Activated naive CD8-positive, alpha-beta T cell treated with anti-CD3 and anti-CD28 coated beads, Interleukin-2, amount 10 ng/mL, durations not matched to agents 7 days and 5 days (primary cell): ENCODE measurements at regions of chrX and their contacts with region 1.

Region 1: GRCh38 chrX:119427024-119427794 is 28.1 kb downstream of the SLC25A43 start:
- DNase-seq: peak; percentile 39
- ATAC-seq: peak; percentile 80
- H3K4me3 Mint-ChIP-seq: peak overlapping the region; percentile 65
- H3K27ac Mint-ChIP-seq: peak overlapping the region; percentile 89
- H3K4me1 Mint-ChIP-seq: peaks cover 15% of the 10 kb centered on the region
- H3K27me3 Mint-ChIP-seq: no peaks in the 10 kb centered on the region

Region 2: DNA sequence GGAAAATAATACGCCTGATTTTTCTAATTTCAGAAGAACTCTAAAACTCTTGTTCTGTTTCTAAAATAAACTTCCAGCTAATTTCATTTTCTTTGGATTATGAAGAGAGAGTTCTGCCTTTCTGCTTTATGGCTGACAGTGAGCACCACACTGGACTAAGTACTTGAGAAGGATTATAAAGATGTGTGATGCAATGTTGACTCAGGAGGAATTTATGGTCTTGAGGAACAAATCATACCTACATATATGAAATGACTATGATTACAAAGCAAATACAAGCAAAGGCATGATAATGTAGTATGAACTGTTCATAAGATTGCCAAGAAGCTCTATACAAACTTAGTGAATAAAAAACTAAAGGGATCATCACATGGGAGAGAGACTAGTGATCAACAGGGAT is 28.1 kb after region 1 on chrX:
- POLR2A ChIA-PET with region 1: no interaction called
- DNase-seq: no peak
- ATAC-seq: no peak
- H3K4me3 Mint-ChIP-seq: no peak overlapping the region
- H3K27ac Mint-ChIP-seq: no peak overlapping the region
- H3K4me1 Mint-ChIP-seq: no peaks in the 10 kb centered on the region
- H3K27me3 Mint-ChIP-seq: no peaks in the 10 kb centered on the region

Region 3: DNA sequence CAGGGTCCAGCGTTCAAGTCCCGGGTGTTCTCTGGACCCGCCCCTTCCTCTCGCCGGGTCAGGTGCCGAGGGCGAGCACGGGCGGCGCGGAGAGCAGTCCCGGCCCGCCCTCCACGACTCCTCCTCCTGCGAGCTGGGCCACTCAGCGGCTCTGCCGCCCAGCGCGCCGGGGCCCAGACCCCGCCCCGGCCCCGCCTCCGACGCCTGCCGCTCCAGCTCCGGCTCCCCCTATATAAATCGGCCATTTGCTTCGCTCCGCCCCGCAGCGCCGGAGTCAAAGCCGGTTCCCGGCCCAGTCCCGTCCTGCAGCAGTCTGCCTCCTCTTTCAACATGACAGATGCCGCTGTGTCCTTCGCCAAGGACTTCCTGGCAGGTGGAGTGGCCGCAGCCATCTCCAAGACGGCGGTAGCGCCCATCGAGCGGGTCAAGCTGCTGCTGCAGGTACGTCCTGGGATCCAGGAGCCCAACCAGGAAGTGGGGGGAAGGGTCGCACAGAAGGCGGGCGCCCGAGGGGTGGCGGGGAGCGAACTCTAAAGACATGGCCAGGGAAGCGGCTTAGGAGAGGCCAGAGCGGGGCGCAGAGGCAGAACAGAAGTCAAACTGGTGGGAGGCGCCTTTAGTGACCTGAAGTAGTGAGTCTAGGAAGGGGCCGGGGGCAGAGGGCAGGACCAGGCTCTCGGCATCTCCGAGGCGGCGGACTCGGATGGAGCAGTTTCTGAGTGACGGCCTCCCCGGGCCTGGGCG is 41.1 kb after region 1 on chrX and contains the start of gene SLC25A5:
- POLR2A ChIA-PET with region 1: interaction called, 12 read pairs
- DNase-seq: peak; percentile 86
- ATAC-seq: peak; percentile 87
- H3K4me3 Mint-ChIP-seq: peak within 1 kb of the TSS; percentile 84
- H3K27ac Mint-ChIP-seq: peak within 1 kb of the TSS; percentile 94
- H3K4me1 Mint-ChIP-seq: peaks cover 7% of the 10 kb centered on the region
- H3K27me3 Mint-ChIP-seq: no peaks in the 10 kb centered on the region
- total RNA-seq, gene SLC25A5: 321 to 325 TPM